WTC11 (cell line): ENCODE measurements at regions of chr6 and their contacts with region 1.

Region 1: DNA sequence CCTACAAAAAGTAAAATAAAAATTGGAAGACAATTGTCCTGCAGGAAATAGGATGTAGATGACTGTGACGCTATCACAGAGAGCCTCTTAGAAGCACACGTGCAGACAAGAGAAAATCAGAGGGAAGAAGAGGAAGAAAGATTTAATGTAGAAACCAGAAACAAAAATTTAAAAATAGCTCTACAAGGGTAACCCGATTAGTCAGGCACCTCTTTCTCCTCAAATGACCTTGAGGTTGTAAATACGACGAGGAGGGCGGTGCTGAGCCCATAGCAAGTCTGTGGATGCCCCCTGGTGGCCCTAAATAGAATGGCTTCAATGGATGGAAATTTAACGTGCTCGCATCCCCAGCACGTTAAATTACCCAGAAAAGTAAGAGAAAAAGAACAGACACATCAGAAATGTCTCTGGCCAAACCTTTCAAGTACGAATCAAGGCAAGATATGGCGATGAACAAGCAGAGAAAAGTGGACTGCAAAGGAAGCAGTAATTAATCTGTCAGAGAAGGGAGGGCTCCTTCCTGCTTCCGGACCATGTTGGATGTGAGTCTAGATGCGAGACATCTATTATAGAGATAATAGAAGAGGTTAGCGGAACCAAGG is 4.2 kb upstream of the PRPH2 start:
- DNase-seq: peak; percentile 58
- ATAC-seq: peak; percentile 93
- H3K4me3 Mint-ChIP-seq: no peak overlapping the region
- H3K27ac Mint-ChIP-seq: peak overlapping the region; percentile 25; the same call in 1 of the 2 replicates
- H3K4me1 Mint-ChIP-seq: peaks cover 9% of the 10 kb centered on the region
- H3K27me3 Mint-ChIP-seq: no peaks in the 10 kb centered on the region; the same call in 1 of the 2 replicates
- CTCF ChIP-seq: peak; percentile 88

Region 2: DNA sequence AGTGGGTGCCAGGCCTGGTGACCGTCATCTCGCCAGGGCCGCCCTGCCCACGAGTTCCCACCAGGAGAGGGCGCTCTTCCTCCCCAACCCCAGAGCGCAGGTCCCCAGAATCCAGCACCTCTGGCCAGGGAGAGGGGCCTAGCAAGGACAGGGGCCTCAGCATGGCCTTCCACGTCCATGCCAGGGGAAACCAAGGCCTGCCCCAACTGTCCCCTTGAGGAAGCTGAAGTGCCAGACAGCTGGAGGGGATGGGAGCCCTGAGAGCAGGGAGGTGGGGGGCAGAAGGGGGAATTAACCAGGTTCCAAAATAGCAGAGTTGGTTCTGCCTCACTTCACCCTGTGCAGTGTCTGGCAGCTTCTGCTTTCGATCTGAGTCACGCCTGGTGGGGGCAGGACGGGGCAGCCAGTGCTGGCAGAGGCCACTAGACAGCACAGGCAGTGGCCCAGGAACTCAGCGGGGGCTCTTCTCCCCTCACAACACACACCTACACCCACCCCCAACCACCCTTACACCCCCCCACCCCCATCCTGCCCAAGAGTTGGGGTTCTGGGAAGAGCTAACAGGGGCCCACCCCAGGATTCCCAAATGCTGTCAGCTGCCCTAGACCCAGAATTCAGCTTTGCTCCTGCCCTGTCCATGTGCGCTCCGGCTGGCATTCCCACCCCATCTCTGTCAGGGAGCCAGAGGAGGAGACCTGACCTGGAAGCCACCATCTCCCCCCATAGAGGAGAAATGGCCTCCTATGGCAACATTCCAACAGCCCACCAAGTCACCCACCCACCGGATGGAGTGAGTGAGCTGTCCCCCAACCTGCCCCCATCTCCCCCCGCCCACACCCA is 1020.4 kb before region 1 on chr6:
- CTCF ChIA-PET with region 1: no interaction called
- POLR2A ChIA-PET with region 1: no interaction called
- DNase-seq: peak; percentile 81
- ATAC-seq: peak; percentile 91
- H3K4me3 Mint-ChIP-seq: no peak overlapping the region
- H3K27ac Mint-ChIP-seq: no peak overlapping the region
- H3K4me1 Mint-ChIP-seq: peaks cover 6% of the 10 kb centered on the region
- H3K27me3 Mint-ChIP-seq: no peaks in the 10 kb centered on the region
- CTCF ChIP-seq: peak; percentile 90

Region 3: GRCh38 chr6:42453654-42454427 is 272.7 kb before region 1 on chr6:
- CTCF ChIA-PET with region 1: no interaction called
- POLR2A ChIA-PET with region 1: no interaction called
- DNase-seq: peak; percentile 62
- ATAC-seq: peak; percentile 2; the same call in 1 of the 2 replicates
- H3K4me3 Mint-ChIP-seq: peak overlapping the region; percentile 100
- H3K27ac Mint-ChIP-seq: peak overlapping the region; percentile 84
- H3K4me1 Mint-ChIP-seq: peaks cover 36% of the 10 kb centered on the region
- H3K27me3 Mint-ChIP-seq: peaks cover 4% of the 10 kb centered on the region
- CTCF ChIP-seq: no peak

Region 4: GRCh38 chr6:42704241-42704936 is 22.2 kb before region 1 on chr6:
- CTCF ChIA-PET with region 1: interaction called, 26 read pairs
- POLR2A ChIA-PET with region 1: interaction called, 3 read pairs
- DNase-seq: peak; percentile 61
- ATAC-seq: peak; percentile 85
- H3K4me3 Mint-ChIP-seq: peak overlapping the region; percentile 71
- H3K27ac Mint-ChIP-seq: peak overlapping the region; percentile 88
- H3K4me1 Mint-ChIP-seq: peaks cover 14% of the 10 kb centered on the region
- H3K27me3 Mint-ChIP-seq: no peaks in the 10 kb centered on the region
- CTCF ChIP-seq: no peak

Region 5: DNA sequence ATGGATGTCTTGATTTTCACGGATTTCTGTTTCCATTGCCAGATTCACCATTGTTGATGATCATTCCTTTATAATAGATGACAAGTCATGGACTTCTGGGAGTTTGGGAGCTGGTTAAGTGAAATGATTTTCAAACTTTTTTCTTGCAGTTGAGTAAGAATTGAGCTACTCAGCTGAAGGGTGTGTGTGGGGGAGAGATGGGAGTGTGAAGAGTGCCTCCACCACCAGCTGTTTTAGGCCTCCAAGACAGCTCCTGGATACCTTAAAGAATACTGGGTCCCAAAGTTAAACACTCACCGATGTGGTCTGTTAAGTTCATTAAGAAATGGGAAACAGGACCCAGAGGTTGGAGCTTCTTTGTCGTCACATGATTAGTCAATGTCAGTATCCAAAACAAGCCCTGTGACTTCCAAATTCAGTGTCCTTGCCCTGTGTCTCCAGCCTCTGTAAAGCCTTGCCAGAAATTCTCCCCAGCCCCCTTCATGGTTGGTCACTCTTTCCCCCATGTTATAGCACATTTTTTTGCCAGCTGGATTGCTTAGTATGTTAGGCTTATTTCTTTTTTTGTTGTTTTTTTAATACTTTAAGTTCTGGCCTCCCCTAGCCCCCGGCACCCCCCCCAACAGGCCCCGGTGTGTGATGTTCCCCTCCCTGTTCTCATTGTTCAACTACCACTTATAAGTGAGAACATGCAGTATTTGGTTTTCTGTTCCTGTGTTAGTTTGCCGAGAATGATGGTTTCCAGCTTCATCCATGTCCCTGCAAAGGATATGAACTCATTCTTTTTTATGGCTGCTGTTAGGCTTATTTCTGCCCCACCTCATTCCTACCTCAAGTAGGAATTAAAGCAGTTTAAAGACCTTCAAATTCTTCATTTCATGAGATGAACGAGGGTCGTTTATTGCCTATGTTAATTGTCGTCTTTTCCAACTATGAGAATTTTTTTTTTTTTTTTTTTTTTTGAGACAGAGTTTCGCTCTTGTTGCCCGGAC is 82.2 kb after region 1 on chr6:
- CTCF ChIA-PET with region 1: no interaction called
- POLR2A ChIA-PET with region 1: no interaction called
- DNase-seq: no peak
- ATAC-seq: no peak
- H3K4me3 Mint-ChIP-seq: no peak overlapping the region
- H3K27ac Mint-ChIP-seq: peak overlapping the region; percentile 77; the same call in 1 of the 2 replicates
- H3K4me1 Mint-ChIP-seq: no peaks in the 10 kb centered on the region
- H3K27me3 Mint-ChIP-seq: no peaks in the 10 kb centered on the region
- CTCF ChIP-seq: no peak